Heart right ventricle (tissue), 16 donors: ENCODE measurements at regions of chr10 and their contacts with region 1.

Region 1: DNA sequence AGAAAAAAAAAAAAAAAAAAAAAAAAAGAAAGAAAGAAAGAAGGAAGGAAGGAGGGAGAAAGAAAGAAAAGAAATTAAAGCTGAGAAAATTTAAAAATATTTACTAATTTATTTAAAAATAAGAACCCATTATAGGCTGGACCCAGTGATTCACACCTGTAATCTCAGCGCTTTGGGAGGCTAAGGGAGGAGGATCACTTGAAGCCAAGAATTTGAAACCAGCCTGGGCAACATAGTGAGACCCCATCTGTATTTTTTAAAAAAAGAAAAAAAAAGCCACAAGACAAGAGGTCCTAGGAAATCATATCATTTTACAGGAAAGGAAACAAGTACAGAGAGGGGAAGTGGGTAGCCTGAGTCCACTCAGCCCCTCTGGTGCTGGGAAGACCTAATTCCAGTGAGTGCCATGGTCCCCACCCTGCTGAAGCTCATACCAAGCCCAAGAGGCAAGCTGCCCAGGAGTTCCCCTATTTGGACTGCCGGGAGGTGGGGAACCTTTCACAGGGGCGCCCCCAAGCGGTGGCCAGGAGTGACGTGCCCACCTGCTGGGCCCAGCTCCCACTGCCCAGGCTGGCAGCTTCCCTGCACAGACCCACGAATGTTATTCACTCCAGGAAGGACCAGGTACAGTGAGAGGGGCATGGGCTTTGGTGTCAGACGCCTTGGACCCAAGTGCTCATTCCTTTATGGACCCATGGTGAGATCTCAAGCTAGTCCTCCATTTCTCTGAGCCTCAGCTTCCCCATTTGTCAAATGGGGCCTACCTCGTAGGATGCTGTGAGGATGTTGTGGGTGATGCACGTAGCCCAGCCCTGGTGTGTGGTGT is 133.6 kb downstream of the ZMIZ1 start:
- DNase-seq: peak in 1 of 2 donors; percentile 49
- ATAC-seq: peak in 7 of 8 donors; percentile 19 to 71 (median 54)
- H3K4me3 ChIP-seq: no peak overlapping the region
- H3K27ac ChIP-seq: peak overlapping the region in 3 of 10 donors; percentile 15 to 43 (median 41)
- H3K4me1 ChIP-seq: peaks cover 0 to 36% (median 22%) of the 10 kb centered on the region in 9 donors
- H3K27me3 ChIP-seq: no peaks in the 10 kb centered on the region
- CTCF ChIP-seq: peak in 8 of 9 donors; percentile 28 to 65 (median 54)

Region 2: GRCh38 chr10:78211561-78212051 is 990.8 kb before region 1 on chr10:
- intact Hi-C with region 1: loop called in 9 of 10 experiments (anchors 5 to 10 kb)
- DNase-seq: peak in 1 of 2 donors; percentile 39
- ATAC-seq: peak in 5 of 8 donors; percentile 1 to 40 (median 9)
- H3K4me3 ChIP-seq: no peak overlapping the region
- H3K27ac ChIP-seq: peak overlapping the region in 4 of 10 donors; percentile 1 to 56 (median 12)
- H3K4me1 ChIP-seq: peaks cover 20 to 40% (median 25%) of the 10 kb centered on the region in 9 donors
- H3K27me3 ChIP-seq: no peaks in the 10 kb centered on the region
- CTCF ChIP-seq: peak; percentile 19 to 66 (median 51)

Region 3: GRCh38 chr10:79463578-79464496 is 261.4 kb after region 1 on chr10:
- intact Hi-C with region 1: no loop called
- DNase-seq: peak; percentile 40 to 53
- ATAC-seq: peak in 6 of 8 donors; percentile 19 to 66 (median 36)
- H3K4me3 ChIP-seq: no peak overlapping the region
- H3K27ac ChIP-seq: peak overlapping the region in 1 of 10 donors; percentile 8
- H3K4me1 ChIP-seq: peaks cover 7 to 41% (median 29%) of the 10 kb centered on the region in 9 donors
- H3K27me3 ChIP-seq: no peaks in the 10 kb centered on the region
- CTCF ChIP-seq: no peak